Endothelial cell of umbilical vein (primary cell): ENCODE measurements at regions of chr5 and their contacts with region 1.

Region 1: DNA sequence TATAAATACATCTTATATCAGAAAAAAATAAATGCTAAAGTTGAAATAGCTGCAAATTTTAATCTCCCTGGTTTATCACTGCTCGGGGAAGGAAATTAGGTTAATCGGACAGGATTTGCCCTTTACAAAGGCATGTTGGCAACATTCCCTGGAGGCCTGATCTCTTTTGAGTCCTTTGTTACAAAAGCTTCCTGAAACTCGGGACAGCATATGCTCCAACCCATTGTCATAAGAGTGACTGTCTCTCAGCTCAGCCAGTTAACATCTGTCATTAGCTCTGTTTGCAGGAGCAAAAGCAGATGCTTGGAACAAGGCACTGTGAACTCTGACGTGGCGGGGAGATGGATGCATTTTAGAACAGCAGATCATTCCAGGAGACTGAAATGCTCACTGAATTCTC is 80.6 kb downstream of the MYO10 start:
- DNase-seq: peak; percentile 83
- H3K4me3 ChIP-seq: no peak overlapping the region
- H3K27ac ChIP-seq: peak overlapping the region; percentile 36
- H3K4me1 ChIP-seq: peaks cover 24% of the 10 kb centered on the region
- H3K27me3 ChIP-seq: no peaks in the 10 kb centered on the region
- CTCF ChIP-seq: no peak
- POLR2A ChIP-seq: no peak

Region 2: GRCh38 chr5:16889203-16889971 is 33.9 kb after region 1 on chr5:
- CTCF ChIA-PET with region 1: interaction called, 4 read pairs
- POLR2A ChIA-PET with region 1: interaction called, 6 read pairs
- dilution Hi-C with region 1: no loop called
- intact Hi-C with region 1: loop called (anchors 2 kb)
- DNase-seq: peak; percentile 70
- H3K4me3 ChIP-seq: peak overlapping the region in 1 of 3 experiments; percentile 4
- H3K27ac ChIP-seq: peak overlapping the region; percentile 10
- H3K4me1 ChIP-seq: peaks cover 39% of the 10 kb centered on the region
- H3K27me3 ChIP-seq: no peaks in the 10 kb centered on the region
- CTCF ChIP-seq: no peak
- POLR2A ChIP-seq: peak; percentile 38